Aorta (tissue), 5 donors: ENCODE measurements at regions of chr12 and their contacts with region 1.

Region 1: GRCh38 chr12:120649442-120650232 is 9.2 kb downstream of the CABP1 start:
- DNase-seq: peak in 1 of 2 donors; percentile 60
- ATAC-seq: peak; percentile 5
- H3K4me3 ChIP-seq: no peak overlapping the region
- H3K27ac ChIP-seq: no peak overlapping the region
- H3K4me1 ChIP-seq: no peaks in the 10 kb centered on the region
- H3K27me3 ChIP-seq: no peaks in the 10 kb centered on the region

Region 2: GRCh38 chr12:120194534-120195395 is 454.9 kb before region 1 on chr12 and contains the start of gene GCN1:
- intact Hi-C with region 1: no loop called
- DNase-seq: peak; percentile 88 to 96
- ATAC-seq: peak; percentile 94
- H3K4me3 ChIP-seq: peak within 1 kb of the TSS; percentile 84 to 96
- H3K27ac ChIP-seq: peak within 1 kb of the TSS in 1 of 2 donors; percentile 70
- H3K4me1 ChIP-seq: peaks cover 0 to 2% of the 10 kb centered on the region in 2 donors
- H3K27me3 ChIP-seq: no peaks in the 10 kb centered on the region
- total RNA-seq, gene GCN1: 75.1 to 89.8 TPM

Region 3: GRCh38 chr12:120580787-120581723 is 68.6 kb before region 1 on chr12 and contains the start of gene POP5:
- intact Hi-C with region 1: loop called (anchors 5 kb)
- DNase-seq: peak; percentile 97 to 98
- ATAC-seq: peak; percentile 93
- H3K4me3 ChIP-seq: peak within 1 kb of the TSS; percentile 52 to 72
- H3K27ac ChIP-seq: peak within 1 kb of the TSS in 1 of 2 donors; percentile 30
- H3K4me1 ChIP-seq: no peaks in the 10 kb centered on the region
- H3K27me3 ChIP-seq: no peaks in the 10 kb centered on the region
- total RNA-seq, gene POP5: 18.2 to 26.0 TPM

Region 4: DNA sequence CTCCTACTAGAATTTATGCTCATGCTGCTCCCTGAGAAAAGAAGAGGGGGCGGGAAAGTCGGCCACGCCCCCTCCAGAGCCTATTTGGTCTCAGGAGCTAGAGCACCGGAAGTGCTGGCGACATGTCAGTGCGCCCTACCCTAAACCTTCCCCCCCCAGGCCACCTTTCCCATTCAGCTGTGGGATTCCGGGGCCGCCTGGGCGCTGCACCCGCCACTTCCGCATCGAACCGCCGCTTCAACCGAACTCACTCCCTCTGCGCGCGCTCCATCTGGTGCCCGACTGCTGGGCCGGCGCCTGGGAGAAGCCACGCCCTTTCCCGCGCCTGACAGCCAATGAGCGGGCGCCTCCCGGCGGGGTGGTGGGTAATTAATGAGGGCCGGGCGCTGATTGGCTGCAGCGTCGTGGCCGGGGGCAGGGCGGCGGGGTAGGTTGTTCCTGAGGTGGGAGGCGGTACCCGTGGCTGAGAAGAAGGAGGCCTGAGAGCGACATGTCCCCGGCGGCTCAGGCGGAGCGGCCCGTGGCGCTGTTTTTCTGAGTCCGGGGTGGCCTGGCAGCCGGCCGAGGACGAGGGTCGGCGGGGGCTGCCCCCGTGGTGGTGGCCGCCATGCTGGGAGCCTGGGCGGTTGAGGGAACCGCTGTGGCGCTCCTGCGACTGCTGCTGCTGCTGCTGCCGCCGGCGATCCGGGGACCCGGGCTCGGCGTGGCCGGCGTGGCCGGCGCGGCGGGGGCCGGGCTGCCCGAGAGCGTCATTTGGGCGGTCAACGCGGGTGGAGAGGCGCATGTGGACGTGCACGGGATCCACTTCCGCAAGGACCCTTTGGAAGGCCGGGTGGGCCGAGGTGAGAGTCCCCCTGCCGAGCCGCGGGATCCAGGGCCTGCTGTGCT is 37.3 kb after region 1 on chr12 and contains the start of gene MLEC:
- intact Hi-C with region 1: loop called (anchors 2 kb)
- DNase-seq: peak; percentile 99
- ATAC-seq: peak; percentile 97
- H3K4me3 ChIP-seq: peak within 1 kb of the TSS; percentile 79 to 90
- H3K27ac ChIP-seq: peak within 1 kb of the TSS; percentile 18 to 92
- H3K4me1 ChIP-seq: peaks cover 6% of the 10 kb centered on the region in 2 donors
- H3K27me3 ChIP-seq: no peaks in the 10 kb centered on the region
- total RNA-seq, gene MLEC: 67.4 to 92.0 TPM

Region 5: DNA sequence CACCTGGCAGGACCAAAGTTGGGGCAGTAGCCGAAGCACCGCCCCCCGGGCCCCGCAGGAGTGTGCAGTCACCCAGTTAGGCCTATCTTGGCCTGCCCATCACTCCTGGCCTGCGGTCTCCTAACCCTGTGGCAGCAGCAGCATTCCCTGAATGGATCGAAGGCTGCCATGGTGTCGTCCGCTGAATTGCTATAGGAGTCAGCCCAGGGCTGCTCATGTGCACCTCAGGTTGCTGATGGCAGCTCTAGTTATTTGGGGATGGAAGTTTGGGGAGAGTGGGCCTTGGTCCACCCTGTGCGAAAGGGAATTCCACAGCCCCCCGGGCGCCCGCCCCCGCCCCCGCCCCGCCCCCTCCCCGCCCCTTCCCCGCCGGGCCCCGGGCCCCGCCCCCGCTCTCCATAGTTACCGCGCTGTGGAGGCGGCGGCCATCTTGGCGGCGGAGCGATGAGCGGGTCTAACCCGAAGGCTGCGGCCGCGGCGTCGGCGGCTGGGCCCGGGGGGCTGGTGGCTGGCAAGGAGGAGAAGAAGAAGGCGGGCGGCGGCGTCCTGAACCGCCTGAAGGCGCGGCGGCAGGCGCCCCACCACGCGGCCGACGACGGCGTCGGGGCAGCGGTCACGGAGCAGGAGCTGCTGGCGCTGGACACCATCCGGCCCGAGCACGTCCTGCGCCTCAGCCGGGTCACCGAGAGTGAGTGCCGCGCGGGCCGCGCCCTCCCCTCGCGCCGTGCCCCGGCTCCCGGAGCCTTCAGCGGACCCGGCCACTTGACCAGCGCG is 60.6 kb after region 1 on chr12 and contains the start of gene UNC119B:
- intact Hi-C with region 1: loop called (anchors 2 to 5 kb)
- DNase-seq: peak; percentile 81 to 93
- ATAC-seq: peak; percentile 89
- H3K4me3 ChIP-seq: peak within 1 kb of the TSS; percentile 50 to 74
- H3K27ac ChIP-seq: peak within 1 kb of the TSS in 1 of 2 donors; percentile 18
- H3K4me1 ChIP-seq: no peaks in the 10 kb centered on the region
- H3K27me3 ChIP-seq: no peaks in the 10 kb centered on the region
- total RNA-seq, gene UNC119B: 18.6 to 24.4 TPM

Region 6: DNA sequence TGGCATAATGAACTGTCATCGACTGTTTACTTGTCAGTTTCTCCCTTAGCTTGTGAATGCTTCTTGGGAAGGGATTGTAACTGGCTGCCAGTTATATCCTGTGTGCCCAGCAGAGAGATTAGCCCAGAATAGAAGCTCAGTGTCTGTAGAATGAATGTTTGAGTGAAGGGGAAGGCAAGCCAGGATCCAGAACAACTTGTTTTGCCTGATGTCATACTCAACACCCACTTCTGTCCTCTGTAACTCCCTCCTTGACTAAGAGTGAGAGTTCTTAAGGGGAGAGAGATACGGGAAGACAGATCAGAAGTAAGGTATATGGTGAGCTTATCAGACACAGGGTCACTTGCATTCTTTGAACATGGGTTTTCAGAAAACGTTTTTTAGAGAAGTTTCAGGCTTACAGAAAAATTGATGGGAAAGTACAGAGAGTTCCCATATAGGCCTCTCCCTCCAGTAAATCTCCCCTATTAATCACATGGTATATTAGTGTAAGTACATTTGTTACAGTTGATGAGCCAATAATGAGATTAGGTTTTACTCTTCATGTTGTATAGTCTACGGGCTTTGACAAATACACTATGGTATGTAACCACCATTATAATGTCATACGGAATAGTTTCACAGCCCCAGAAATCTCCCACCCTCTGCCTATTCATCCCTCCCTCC is 260.1 kb after region 1 on chr12:
- intact Hi-C with region 1: loop called in 1 of 2 experiments (anchors 5 kb)
- DNase-seq: no peak
- ATAC-seq: no peak
- H3K4me3 ChIP-seq: no peak overlapping the region
- H3K27ac ChIP-seq: no peak overlapping the region
- H3K4me1 ChIP-seq: no peaks in the 10 kb centered on the region
- H3K27me3 ChIP-seq: no peaks in the 10 kb centered on the region

Region 7: GRCh38 chr12:120971299-120972179 is 321.9 kb after region 1 on chr12:
- intact Hi-C with region 1: loop called (anchors 5 kb)
- DNase-seq: no peak
- ATAC-seq: peak; percentile 74
- H3K4me3 ChIP-seq: no peak overlapping the region
- H3K27ac ChIP-seq: no peak overlapping the region
- H3K4me1 ChIP-seq: no peaks in the 10 kb centered on the region
- H3K27me3 ChIP-seq: no peaks in the 10 kb centered on the region